RWPE1 (cell line): ENCODE measurements at regions of chr1 and their contacts with region 1.

Region 1: GRCh38 chr1:156581661-156582387 is 2.3 kb downstream of the TTC24 start:
- DNase-seq: no peak
- H3K27ac ChIP-seq: no peak overlapping the region
- CTCF ChIP-seq: no peak

Region 2: GRCh38 chr1:156608036-156608674 is 26.3 kb after region 1 on chr1:
- CTCF ChIA-PET with region 1: interaction called, 11 read pairs
- POLR2A ChIA-PET with region 1: no interaction called
- DNase-seq: peak; percentile 57
- H3K27ac ChIP-seq: no peak overlapping the region
- CTCF ChIP-seq: peak; percentile 87